WTC11 (cell line): ENCODE measurements at regions of chr16 and their contacts with region 1.

Region 1: GRCh38 chr16:8572919-8573724 is 17.2 kb downstream of the TMEM114 start:
- DNase-seq: peak; percentile 55
- ATAC-seq: peak; percentile 49
- H3K4me3 Mint-ChIP-seq: no peak overlapping the region
- H3K27ac Mint-ChIP-seq: no peak overlapping the region; the same call in 1 of the 2 replicates
- H3K4me1 Mint-ChIP-seq: peaks cover 23% of the 10 kb centered on the region
- H3K27me3 Mint-ChIP-seq: no peaks in the 10 kb centered on the region
- CTCF ChIP-seq: peak; percentile 35; the same call in 1 of the 2 replicates

Region 2: GRCh38 chr16:8589057-8589899 is 16.2 kb after region 1 on chr16:
- CTCF ChIA-PET with region 1: interaction called, 25 read pairs
- POLR2A ChIA-PET with region 1: no interaction called
- DNase-seq: peak; percentile 65
- ATAC-seq: peak; percentile 55
- H3K4me3 Mint-ChIP-seq: no peak overlapping the region
- H3K27ac Mint-ChIP-seq: no peak overlapping the region
- H3K4me1 Mint-ChIP-seq: peaks cover 12% of the 10 kb centered on the region
- H3K27me3 Mint-ChIP-seq: peaks cover 3% of the 10 kb centered on the region
- CTCF ChIP-seq: no peak

Region 3: GRCh38 chr16:8655184-8655717 is 82.1 kb after region 1 on chr16:
- CTCF ChIA-PET with region 1: interaction called, 20 read pairs
- POLR2A ChIA-PET with region 1: interaction called, 3 read pairs
- DNase-seq: peak; percentile 57
- ATAC-seq: peak; percentile 82
- H3K4me3 Mint-ChIP-seq: no peak overlapping the region
- H3K27ac Mint-ChIP-seq: no peak overlapping the region
- H3K4me1 Mint-ChIP-seq: peaks cover 11% of the 10 kb centered on the region; the same call in 1 of the 2 replicates
- H3K27me3 Mint-ChIP-seq: no peaks in the 10 kb centered on the region; the same call in none of the 2 replicates
- CTCF ChIP-seq: peak; percentile 46